ENCODE measurements at regions of chr6 and their contacts with region 1.

Region 1: GRCh38 chr6:15363523-15364400 is 117.9 kb downstream of the JARID2 start:
- DNase-seq: peak; percentile 16
- H3K4me3 Mint-ChIP-seq: no peak overlapping the region
- H3K27ac Mint-ChIP-seq: no peak overlapping the region
- H3K4me1 Mint-ChIP-seq: peaks cover 45% of the 10 kb centered on the region
- H3K27me3 Mint-ChIP-seq: no peaks in the 10 kb centered on the region

Region 2: GRCh38 chr6:15399641-15400470 is 36.1 kb after region 1 on chr6:
- CTCF ChIA-PET with region 1: no interaction called
- POLR2A ChIA-PET with region 1: no interaction called
- intact Hi-C with region 1: loop called (anchors 5 kb)
- DNase-seq: no peak
- H3K4me3 Mint-ChIP-seq: peak overlapping the region; percentile 53
- H3K27ac Mint-ChIP-seq: peak overlapping the region; percentile 10
- H3K4me1 Mint-ChIP-seq: peaks cover 83% of the 10 kb centered on the region
- H3K27me3 Mint-ChIP-seq: no peaks in the 10 kb centered on the region

Measured in activated CD4-positive, alpha-beta memory T cell treated with anti-CD3 and anti-CD28 coated beads for 36 hours (primary cell).